ENCODE measurements at regions of chr3 and their contacts with region 1.

Region 1: GRCh38 chr3:154252759-154253638 is 71.3 kb downstream of the DHX36 start:
- DNase-seq: peak; percentile 27
- H3K4me3 Mint-ChIP-seq: no peak overlapping the region
- H3K27ac Mint-ChIP-seq: no peak overlapping the region
- H3K4me1 Mint-ChIP-seq: peaks cover 4% of the 10 kb centered on the region
- H3K27me3 Mint-ChIP-seq: no peaks in the 10 kb centered on the region

Region 2: DNA sequence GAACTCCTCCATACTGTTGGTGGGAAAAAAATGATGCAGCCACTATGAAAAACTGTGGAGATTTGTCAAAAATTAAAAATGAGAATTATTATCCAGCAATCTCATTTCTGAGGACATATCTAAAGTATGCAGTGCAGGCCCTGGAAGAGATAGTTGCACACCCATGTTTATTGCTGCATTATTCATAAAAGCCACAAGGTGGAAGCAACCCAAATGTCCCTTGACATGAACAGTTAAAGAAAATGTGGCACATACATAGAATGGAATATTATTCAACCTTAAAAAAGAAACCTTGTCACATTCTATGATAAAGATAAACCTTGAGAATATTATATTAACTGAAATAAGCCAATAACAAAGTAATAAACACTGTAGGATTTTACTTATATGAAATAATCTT is 212.7 kb before region 1 on chr3:
- intact Hi-C with region 1: loop called (anchors 1 kb)
- DNase-seq: no peak
- H3K4me3 Mint-ChIP-seq: no peak overlapping the region
- H3K27ac Mint-ChIP-seq: no peak overlapping the region
- H3K4me1 Mint-ChIP-seq: no peaks in the 10 kb centered on the region
- H3K27me3 Mint-ChIP-seq: peaks cover 4% of the 10 kb centered on the region

Region 3: DNA sequence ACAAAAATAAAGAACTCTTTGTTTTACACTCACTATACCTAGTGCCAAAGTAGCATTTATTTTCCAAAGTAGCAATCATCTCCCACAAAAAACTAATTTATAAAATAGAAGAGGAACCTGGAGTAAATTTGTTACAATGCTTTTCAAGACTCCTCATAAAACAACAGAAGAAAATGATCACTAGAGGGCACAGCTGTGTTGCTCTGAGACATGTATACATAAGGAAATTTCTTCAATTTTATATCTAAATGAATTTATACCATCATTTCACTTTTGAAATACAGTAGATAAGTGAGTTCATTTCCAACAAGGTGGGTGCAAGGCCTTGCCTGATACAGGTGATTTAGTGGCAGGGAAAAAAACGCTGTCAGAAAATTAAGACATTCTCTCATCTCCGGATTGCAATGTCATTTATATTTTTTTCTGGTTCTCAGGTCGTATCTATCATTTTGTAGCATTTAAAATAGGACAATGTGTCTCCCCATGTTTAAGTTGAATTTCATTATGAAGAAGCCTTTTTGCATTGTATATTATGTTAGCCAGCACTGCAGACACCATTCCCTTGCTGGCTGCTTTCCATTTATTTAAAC is 157.1 kb before region 1 on chr3:
- intact Hi-C with region 1: loop called (anchors 1 kb)
- DNase-seq: no peak
- H3K4me3 Mint-ChIP-seq: no peak overlapping the region
- H3K27ac Mint-ChIP-seq: no peak overlapping the region
- H3K4me1 Mint-ChIP-seq: no peaks in the 10 kb centered on the region
- H3K27me3 Mint-ChIP-seq: no peaks in the 10 kb centered on the region

Region 4: DNA sequence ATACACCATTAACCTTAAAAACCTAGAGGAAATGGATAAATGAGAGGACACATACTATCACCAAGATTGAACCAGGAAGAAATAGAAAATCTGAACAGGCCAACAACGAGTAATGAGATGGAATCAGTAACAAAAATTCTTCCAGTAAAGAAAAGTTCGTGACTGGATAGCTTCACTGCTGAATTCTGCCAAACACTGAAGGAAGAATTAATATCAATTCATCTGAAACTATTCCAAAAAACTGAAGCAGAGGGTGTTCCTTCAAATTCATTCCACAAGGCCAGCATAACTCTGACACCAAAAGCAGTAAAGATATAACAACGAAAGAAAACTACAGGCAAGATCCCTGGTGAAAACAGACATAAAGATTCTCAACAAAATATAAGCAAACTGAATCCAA is 372.8 kb after region 1 on chr3:
- intact Hi-C with region 1: no loop called
- DNase-seq: no peak
- H3K4me3 Mint-ChIP-seq: no peak overlapping the region
- H3K27ac Mint-ChIP-seq: no peak overlapping the region
- H3K4me1 Mint-ChIP-seq: no peaks in the 10 kb centered on the region
- H3K27me3 Mint-ChIP-seq: no peaks in the 10 kb centered on the region